GM10248 (cell line): ENCODE measurements at regions of chr6 and their contacts with region 1.

Region 1: GRCh38 chr6:110039364-110039980 is 61.4 kb downstream of the GPR6 start:
- DNase-seq: peak; percentile 79
- CTCF ChIP-seq: peak; percentile 89

Region 2: GRCh38 chr6:109526905-109527628 is 512.4 kb before region 1 on chr6:
- CTCF ChIA-PET with region 1: interaction called, 26 read pairs
- POLR2A ChIA-PET with region 1: no interaction called
- DNase-seq: peak; percentile 40
- CTCF ChIP-seq: peak; percentile 82

Region 3: GRCh38 chr6:109705258-109705657 is 334.2 kb before region 1 on chr6:
- CTCF ChIA-PET with region 1: interaction called, 298 read pairs
- POLR2A ChIA-PET with region 1: no interaction called
- DNase-seq: peak; percentile 67
- CTCF ChIP-seq: peak; percentile 97

Region 4: GRCh38 chr6:109736273-109737025 is 303.0 kb before region 1 on chr6:
- CTCF ChIA-PET with region 1: interaction called, 10 read pairs
- POLR2A ChIA-PET with region 1: no interaction called
- DNase-seq: no peak
- CTCF ChIP-seq: no peak

Region 5: GRCh38 chr6:110029144-110029543 is 10.3 kb before region 1 on chr6:
- CTCF ChIA-PET with region 1: interaction called, 54 read pairs
- POLR2A ChIA-PET with region 1: no interaction called
- DNase-seq: no peak
- CTCF ChIP-seq: no peak

Region 6: GRCh38 chr6:110158479-110158878 is 119.0 kb after region 1 on chr6:
- CTCF ChIA-PET with region 1: no interaction called
- POLR2A ChIA-PET with region 1: no interaction called
- DNase-seq: no peak
- CTCF ChIP-seq: no peak

Region 7: DNA sequence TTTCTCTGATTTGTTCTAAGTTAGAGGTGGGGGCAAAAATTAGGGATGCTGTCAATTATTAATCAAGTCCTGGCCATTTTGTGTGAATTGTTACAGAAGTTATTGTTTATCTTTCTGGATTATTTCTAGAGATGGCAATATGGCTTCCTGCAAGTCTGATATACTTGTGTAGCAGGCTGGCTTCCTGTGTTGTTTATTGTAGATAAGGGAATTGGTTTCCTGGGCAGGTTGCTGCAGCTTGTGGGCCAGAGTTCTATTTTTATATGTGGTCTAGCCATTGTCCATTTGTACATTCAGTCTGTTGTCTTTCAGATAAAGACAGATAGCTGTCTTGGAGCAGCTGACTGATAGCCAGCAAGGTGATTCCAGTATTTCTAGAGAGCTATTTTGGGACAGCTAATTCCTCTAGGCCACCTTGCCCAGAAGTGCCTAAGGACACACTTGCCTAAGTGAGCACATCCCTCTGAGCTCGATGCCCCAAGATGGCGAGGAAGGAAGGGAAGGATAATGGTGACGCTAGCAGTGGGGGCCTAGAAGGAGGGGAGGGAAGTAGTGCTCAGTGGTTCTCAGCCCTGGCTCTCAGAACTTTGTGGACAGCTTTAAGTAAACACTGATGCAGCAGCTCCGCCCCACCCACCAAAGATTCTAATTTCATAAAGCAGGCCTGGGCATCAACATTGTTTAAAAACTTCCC is 350.4 kb after region 1 on chr6:
- CTCF ChIA-PET with region 1: interaction called, 77 read pairs
- POLR2A ChIA-PET with region 1: no interaction called
- DNase-seq: no peak
- CTCF ChIP-seq: no peak